ENCODE measurements at regions of chr14 and their contacts with region 1.

Region 1: DNA sequence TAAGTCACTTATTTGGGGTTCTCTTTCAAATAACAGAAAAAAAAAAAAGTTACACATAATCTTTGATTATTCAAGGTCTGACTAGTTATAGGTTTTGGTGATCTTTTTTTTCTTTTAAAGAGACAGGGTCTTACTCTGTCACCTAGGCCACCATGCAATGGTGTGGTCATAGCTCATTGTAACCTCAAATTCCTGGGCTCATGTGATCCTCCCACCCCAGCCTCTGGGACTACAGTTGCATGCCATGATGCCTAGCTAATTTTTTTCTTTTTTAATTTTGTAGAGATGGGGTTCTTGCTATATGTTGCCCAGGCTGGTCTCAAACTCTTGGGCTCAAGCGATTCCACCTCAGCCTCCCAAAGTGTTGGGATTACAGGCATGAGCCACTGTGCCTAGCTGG is 56.5 kb upstream of the CFL2 start:
- DNase-seq: no peak
- ATAC-seq: no peak
- H3K4me3 ChIP-seq: no peak overlapping the region
- H3K4me3 Mint-ChIP-seq: no peak overlapping the region
- H3K27ac ChIP-seq: no peak overlapping the region
- H3K27ac Mint-ChIP-seq: no peak overlapping the region
- H3K4me1 ChIP-seq: no peaks in the 10 kb centered on the region
- H3K4me1 Mint-ChIP-seq: peaks cover 0 to 3% (median 0%) of the 10 kb centered on the region in 3 donors
- H3K27me3 ChIP-seq: no peaks in the 10 kb centered on the region
- H3K27me3 Mint-ChIP-seq: no peaks in the 10 kb centered on the region

Region 2: DNA sequence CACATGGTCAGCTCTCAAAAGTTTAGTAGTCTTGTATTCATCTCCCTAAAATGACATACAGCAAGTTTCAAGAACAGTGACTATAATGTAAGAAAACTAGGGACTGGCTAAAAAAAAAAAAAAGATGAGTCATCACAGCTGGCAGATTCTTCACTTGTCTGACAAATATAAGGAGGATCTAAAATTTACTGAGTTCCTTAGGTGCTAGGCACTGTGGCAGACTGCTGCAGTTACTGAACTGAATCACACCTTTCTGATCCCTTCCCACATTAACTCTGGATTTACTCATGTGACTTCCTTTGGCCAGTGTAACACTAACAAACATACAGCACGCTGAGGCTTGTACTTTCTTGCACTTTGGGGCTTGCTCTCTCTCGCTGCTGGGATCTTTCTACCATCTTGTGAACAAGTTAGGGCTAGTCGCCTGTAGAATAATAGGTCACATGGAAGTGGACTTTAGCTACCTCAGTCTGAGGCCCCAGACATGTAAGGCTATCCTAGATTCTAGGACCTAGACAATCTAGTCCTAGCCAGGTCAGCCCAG is 72.2 kb after region 1 on chr14:
- CTCF ChIA-PET with region 1: no interaction called
- POLR2A ChIA-PET with region 1: interaction called in 1 of 2 experiments, 11 read pairs
- DNase-seq: peak in 1 of 35 experiments; percentile 22
- ATAC-seq: peak in 3 of 4 experiments; percentile 24 to 64 (median 47)
- H3K4me3 ChIP-seq: no peak overlapping the region
- H3K4me3 Mint-ChIP-seq: no peak overlapping the region
- H3K27ac ChIP-seq: no peak overlapping the region
- H3K27ac Mint-ChIP-seq: peak overlapping the region; percentile 24 to 77
- H3K4me1 ChIP-seq: peaks cover 0 to 7% of the 10 kb centered on the region in 2 experiments
- H3K4me1 Mint-ChIP-seq: peaks cover 30 to 38% (median 37%) of the 10 kb centered on the region in 3 donors
- H3K27me3 ChIP-seq: no peaks in the 10 kb centered on the region
- H3K27me3 Mint-ChIP-seq: no peaks in the 10 kb centered on the region